RWPE1 (cell line): ENCODE measurements at regions of chr15 and their contacts with region 1.

Region 1: GRCh38 chr15:89358755-89359439 is 24.3 kb upstream of the POLG start:
- DNase-seq: peak; percentile 84
- H3K27ac ChIP-seq: no peak overlapping the region
- CTCF ChIP-seq: peak; percentile 99

Region 2: GRCh38 chr15:89378296-89379151 is 19.6 kb after region 1 on chr15:
- CTCF ChIA-PET with region 1: interaction called, 15 read pairs
- POLR2A ChIA-PET with region 1: no interaction called
- DNase-seq: peak; percentile 70
- H3K27ac ChIP-seq: no peak overlapping the region
- CTCF ChIP-seq: no peak

Region 3: DNA sequence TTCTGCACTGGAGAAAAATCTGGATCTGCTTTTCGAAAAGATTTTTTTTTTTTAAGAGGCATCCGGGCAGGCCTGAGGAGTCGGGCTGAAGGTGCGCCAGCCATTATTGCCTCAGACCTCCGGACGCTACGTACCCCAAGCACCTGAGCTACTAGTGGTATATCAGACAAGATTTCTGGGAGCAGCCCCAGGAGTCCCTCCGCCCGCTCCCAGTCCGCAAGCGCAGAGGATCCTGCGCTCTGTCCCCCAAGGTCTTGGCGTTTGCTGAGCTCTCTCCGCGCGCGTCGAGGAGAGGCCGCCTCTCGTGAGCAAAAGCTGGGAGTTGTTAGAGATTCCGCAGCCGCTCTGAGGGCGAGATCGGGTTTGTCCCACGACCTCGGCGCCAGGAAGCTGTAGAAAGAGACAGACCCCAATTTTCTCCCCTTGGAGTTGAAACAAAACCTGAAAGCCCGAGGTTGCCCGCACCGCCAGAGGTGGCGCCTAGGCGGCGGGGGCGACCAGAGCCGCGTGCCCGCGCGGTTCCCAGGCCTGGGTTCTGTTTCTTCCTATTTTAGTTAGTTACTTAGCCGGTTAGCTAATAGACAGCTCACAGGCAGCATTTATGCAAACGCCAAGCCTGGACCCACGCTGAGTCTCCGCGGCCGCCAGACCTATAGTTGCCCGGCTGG is 48.2 kb after region 1 on chr15:
- CTCF ChIA-PET with region 1: interaction called, 84 read pairs
- POLR2A ChIA-PET with region 1: interaction called, 3 read pairs
- DNase-seq: no peak
- H3K27ac ChIP-seq: no peak overlapping the region
- CTCF ChIP-seq: no peak

Region 4: DNA sequence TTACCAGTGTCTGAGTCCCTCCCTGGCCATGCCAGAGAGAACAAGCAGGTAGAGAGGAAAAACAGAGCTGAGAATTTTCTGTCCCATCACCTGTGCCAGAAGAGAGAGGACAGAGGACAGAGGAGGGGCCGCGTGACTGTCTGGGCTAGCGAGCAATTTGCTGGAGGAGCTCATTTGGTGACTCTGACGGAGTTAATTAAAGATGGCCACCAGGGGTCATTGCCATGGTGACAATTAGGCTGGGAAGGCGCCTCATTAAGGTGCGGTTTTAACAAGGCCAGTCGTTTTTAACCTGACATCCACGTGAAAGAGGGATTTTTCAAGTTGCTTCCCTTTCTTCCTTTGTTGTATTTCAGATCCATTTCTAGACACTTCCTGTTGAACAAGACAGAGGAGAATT is 65.1 kb after region 1 on chr15:
- CTCF ChIA-PET with region 1: interaction called, 62 read pairs
- POLR2A ChIA-PET with region 1: no interaction called
- DNase-seq: no peak
- H3K27ac ChIP-seq: no peak overlapping the region
- CTCF ChIP-seq: no peak

Region 5: GRCh38 chr15:89436570-89437316 is 77.8 kb after region 1 on chr15:
- CTCF ChIA-PET with region 1: interaction called, 23 read pairs
- POLR2A ChIA-PET with region 1: no interaction called
- DNase-seq: no peak
- H3K27ac ChIP-seq: no peak overlapping the region
- CTCF ChIP-seq: no peak

Region 6: DNA sequence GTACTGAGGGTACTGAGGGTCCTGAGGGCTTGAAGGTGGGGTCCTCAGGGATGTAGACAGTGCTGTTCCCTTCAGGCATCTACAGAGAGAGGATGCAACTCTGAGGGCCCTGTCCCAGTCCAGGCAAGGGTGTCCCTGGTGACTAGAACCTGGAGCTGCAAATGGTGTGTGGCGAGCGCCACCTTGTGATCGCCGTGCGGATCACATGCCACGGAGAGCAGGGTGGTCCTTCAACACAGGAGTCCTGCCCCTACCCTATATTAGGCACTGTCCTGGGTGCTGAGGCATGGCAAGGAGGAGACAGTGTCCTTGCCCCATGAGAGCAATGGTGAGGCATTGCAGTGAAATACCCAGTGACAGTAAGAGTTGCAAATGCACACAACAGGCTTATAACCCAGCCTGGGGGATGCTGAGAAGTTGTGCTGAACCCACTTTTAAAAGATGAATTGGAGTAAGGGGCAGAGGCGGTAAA is 113.9 kb after region 1 on chr15:
- CTCF ChIA-PET with region 1: interaction called, 15 read pairs
- POLR2A ChIA-PET with region 1: no interaction called
- DNase-seq: peak; percentile 67
- H3K27ac ChIP-seq: no peak overlapping the region
- CTCF ChIP-seq: peak; percentile 88